ENCODE measurements at regions of chr12 and their contacts with region 1.

Region 1: DNA sequence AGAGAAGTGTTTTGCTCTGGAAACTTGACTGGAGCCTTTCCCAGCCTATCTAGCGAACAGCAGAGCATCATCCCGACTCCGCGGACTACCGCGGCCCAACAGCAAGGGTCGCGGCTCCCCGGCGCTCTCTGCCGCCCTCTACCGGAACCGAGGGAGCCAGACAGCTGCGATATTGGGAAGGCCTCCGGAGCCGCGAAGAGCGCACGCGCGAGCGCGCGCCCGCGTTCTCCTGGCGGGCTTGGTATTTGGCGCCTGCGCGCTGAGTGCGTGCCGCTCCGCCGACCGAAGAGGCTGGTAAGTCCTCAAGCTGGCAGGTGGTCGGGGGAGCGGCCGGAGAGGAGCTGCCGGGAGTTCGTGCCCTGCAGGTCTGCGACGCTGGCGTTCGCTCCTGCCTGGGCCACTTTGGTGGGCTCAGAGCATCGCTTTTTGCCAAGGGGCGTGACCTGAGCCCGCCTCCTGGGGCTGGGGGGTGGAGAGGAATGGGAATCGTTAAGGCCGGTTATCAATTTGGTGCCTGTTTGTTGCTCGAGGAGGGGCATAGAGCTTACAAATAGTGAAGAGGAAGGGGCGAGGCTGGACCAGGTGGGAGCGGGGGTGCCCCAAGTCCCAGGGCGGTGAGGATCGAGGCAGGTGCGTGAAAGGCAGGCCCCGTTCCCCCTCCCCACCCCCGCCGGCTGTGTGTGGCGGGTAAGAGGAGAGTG is at the start of gene TMEM106C:
- DNase-seq: peak; percentile 75
- ATAC-seq: peak; percentile 98
- H3K4me3 ChIP-seq: peak within 1 kb of the TSS; percentile 81
- H3K27ac ChIP-seq: peak within 1 kb of the TSS; percentile 21
- H3K4me1 ChIP-seq: peaks cover 3% of the 10 kb centered on the region
- H3K27me3 ChIP-seq: no peaks in the 10 kb centered on the region; a peak in 2 of 4 replicates
- CTCF ChIP-seq: peak; percentile 98 to 99 (median 99); a peak in 5 of 6 replicates
- EP300 ChIP-seq: no peak
- POLR2A ChIP-seq: peak; percentile 82
- RAD21 ChIP-seq: peak; percentile 68
- polyA plus RNA-seq, gene TMEM106C: 190 to 236 TPM

Region 2: DNA sequence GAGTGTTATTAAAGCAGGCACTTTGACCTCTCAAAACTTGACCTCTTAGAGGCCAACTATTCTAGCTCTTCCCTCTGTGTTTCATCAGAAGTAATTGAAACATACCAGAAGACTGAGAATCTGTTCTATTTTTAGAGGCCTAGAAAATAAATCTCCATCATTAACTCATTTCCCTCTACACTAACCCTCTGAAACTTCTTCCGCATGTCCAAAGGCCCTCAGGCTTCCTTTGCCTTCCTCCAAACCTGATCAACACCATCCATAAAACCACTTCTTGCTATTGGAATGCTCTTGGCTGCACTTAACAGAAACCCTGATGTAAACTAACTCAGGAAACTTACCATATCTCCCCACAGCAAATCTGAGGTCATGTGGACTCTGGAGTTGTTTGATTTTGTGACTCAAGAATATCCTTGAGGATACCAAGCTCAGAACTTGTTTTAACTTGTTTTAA is 454.1 kb before region 1 on chr12:
- CTCF ChIA-PET with region 1: no interaction called
- POLR2A ChIA-PET with region 1: no interaction called
- RAD21 ChIA-PET with region 1: no interaction called
- SMC1A ChIA-PET with region 1: no interaction called
- in situ Hi-C with region 1: no loop called
- intact Hi-C with region 1: no loop called
- DNase-seq: no peak
- ATAC-seq: no peak
- H3K4me3 ChIP-seq: no peak overlapping the region
- H3K27ac ChIP-seq: no peak overlapping the region
- H3K4me1 ChIP-seq: no peaks in the 10 kb centered on the region
- H3K27me3 ChIP-seq: no peaks in the 10 kb centered on the region
- CTCF ChIP-seq: no peak
- EP300 ChIP-seq: no peak
- POLR2A ChIP-seq: no peak
- RAD21 ChIP-seq: no peak

Region 3: GRCh38 chr12:47870175-47870781 is 93.2 kb before region 1 on chr12:
- CTCF ChIA-PET with region 1: interaction called, 5 read pairs
- POLR2A ChIA-PET with region 1: no interaction called
- RAD21 ChIA-PET with region 1: interaction called, 8 read pairs
- SMC1A ChIA-PET with region 1: no interaction called
- in situ Hi-C with region 1: no loop called
- intact Hi-C with region 1: loop called (anchors 5 kb)
- DNase-seq: peak; percentile 43
- ATAC-seq: peak; percentile 76
- H3K4me3 ChIP-seq: no peak overlapping the region
- H3K27ac ChIP-seq: 0 out of 2 replicates have a peak overlapping the region, but pooled peaks have one; percentile 4
- H3K4me1 ChIP-seq: peaks cover 31% of the 10 kb centered on the region
- H3K27me3 ChIP-seq: no peaks in the 10 kb centered on the region
- CTCF ChIP-seq: peak; percentile 22 to 62 (median 53); a peak in 5 of 6 replicates
- EP300 ChIP-seq: no peak
- POLR2A ChIP-seq: no peak
- RAD21 ChIP-seq: peak; percentile 51

Region 4: DNA sequence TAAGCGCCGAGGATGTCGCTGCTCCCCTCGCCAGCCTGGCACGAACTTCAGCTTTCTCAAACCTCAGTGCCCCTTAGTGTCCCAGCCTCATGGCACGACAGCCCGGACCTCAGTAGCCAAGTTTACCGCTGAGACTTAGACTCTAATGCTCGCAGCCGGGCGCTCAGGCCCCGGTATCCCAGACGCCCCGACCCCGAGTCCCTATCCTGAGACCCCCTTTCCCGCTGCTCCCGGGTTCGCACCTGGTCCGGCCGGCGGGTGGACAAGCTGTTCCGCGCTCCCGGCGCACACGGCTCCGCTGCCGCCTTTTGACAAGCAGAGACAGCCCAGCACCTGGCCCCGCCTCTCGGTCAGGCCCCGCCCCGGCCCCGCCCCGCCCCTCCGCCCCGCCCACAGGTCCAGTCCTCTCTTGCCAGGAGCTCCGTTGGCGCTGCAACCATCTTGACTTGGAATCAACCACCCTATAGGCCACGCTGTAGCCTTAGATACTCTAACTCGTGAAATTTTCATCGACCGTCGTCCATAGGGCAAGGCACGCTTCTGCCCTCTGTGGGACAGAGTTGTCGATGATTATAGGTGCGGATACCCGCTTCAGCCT is 58.7 kb before region 1 on chr12 and contains the start of gene VDR:
- CTCF ChIA-PET with region 1: interaction called, 11 read pairs
- POLR2A ChIA-PET with region 1: no interaction called
- RAD21 ChIA-PET with region 1: interaction called, 3 read pairs
- SMC1A ChIA-PET with region 1: interaction called, 4 read pairs
- in situ Hi-C with region 1: no loop called
- intact Hi-C with region 1: no loop called
- DNase-seq: no peak
- ATAC-seq: peak; percentile 85
- H3K4me3 ChIP-seq: peak within 1 kb of the TSS; percentile 84
- H3K27ac ChIP-seq: no peak within 1 kb of the TSS
- H3K4me1 ChIP-seq: peaks cover 30% of the 10 kb centered on the region
- H3K27me3 ChIP-seq: peaks cover 4 to 5% of the 10 kb centered on the region in 2 experiments; a peak in 1 of 4 replicates
- CTCF ChIP-seq: peak in 2 of 3 experiments; percentile 4 to 34; a peak in 2 of 6 replicates
- EP300 ChIP-seq: no peak
- POLR2A ChIP-seq: peak; percentile 69
- RAD21 ChIP-seq: no peak
- polyA plus RNA-seq, gene VDR: 0.27 to 0.75 TPM

Region 5: GRCh38 chr12:47949441-47950308 is 13.8 kb before region 1 on chr12:
- CTCF ChIA-PET with region 1: interaction called, 13 read pairs
- POLR2A ChIA-PET with region 1: no interaction called
- RAD21 ChIA-PET with region 1: interaction called, 4 read pairs
- SMC1A ChIA-PET with region 1: interaction called, 3 read pairs
- in situ Hi-C with region 1: no loop called
- intact Hi-C with region 1: no loop called
- DNase-seq: no peak
- ATAC-seq: peak; percentile 93
- H3K4me3 ChIP-seq: no peak overlapping the region
- H3K27ac ChIP-seq: no peak overlapping the region
- H3K4me1 ChIP-seq: no peaks in the 10 kb centered on the region
- H3K27me3 ChIP-seq: 0 out of 4 replicates have a peak, but pooled peaks cover 0 to 5% of the 10 kb centered on the region in 2 experiments
- CTCF ChIP-seq: peak; percentile 75 to 89 (median 87)
- EP300 ChIP-seq: no peak
- POLR2A ChIP-seq: no peak
- RAD21 ChIP-seq: peak; percentile 76

Region 6: GRCh38 chr12:48084066-48084465 is 120.6 kb after region 1 on chr12:
- CTCF ChIA-PET with region 1: no interaction called
- POLR2A ChIA-PET with region 1: no interaction called
- RAD21 ChIA-PET with region 1: no interaction called
- SMC1A ChIA-PET with region 1: interaction called, 4 read pairs
- in situ Hi-C with region 1: no loop called
- intact Hi-C with region 1: loop called (anchors 5 kb)
- DNase-seq: no peak
- ATAC-seq: no peak
- H3K4me3 ChIP-seq: no peak overlapping the region
- H3K27ac ChIP-seq: no peak overlapping the region
- H3K4me1 ChIP-seq: no peaks in the 10 kb centered on the region; the same call in 1 of the 2 replicates
- H3K27me3 ChIP-seq: no peaks in the 10 kb centered on the region; a peak in 1 of 4 replicates
- CTCF ChIP-seq: no peak; a peak in 1 of 6 replicates
- EP300 ChIP-seq: no peak
- POLR2A ChIP-seq: no peak
- RAD21 ChIP-seq: peak; percentile 28

Region 7: DNA sequence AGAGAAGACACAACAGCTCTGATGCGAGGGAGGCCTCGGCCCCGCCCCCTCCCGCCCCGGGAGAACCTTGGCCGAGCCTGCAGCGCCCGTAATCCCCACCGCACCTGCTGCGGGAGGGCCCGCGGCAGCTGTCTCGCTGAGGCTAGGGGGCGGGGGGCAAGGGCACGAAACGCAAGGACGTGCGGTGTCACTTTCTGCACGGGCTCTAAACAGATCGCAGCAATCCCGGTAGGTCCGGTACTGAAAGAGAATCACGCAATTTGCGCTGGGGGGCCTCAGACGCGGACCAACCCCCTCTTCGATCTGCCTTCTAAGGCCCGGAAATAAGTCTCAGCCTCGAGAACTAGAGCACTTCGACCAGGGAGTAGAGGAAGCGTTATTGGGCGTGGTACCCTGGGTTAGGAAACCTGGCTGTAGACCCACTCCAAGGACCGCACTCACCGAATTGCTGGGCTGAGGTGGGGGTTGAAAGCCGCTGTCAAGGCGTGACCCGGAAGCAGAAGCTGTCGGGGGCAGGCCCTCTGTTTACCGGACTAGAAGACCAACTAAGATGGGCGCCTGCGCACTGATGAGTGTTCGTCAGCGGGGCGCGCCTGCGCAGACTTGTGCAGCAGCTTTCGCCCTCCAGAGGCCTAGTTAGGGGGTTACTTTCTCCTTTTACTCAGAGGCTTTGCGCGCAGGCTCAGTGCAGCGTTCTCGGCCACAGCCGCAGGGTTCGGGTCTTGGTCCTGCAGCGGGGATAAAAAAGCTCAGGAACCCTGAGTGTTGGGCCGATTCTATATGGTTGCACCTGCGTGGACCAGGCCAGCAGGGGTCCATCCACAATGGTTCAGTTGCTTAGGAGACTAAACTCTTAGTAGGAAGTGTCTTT is 193.8 kb after region 1 on chr12 and contains the start of gene ASB8:
- CTCF ChIA-PET with region 1: interaction called, 16 read pairs
- POLR2A ChIA-PET with region 1: interaction called, 3 read pairs
- RAD21 ChIA-PET with region 1: interaction called, 3 read pairs
- SMC1A ChIA-PET with region 1: no interaction called
- in situ Hi-C with region 1: loop called (anchors 5 kb)
- intact Hi-C with region 1: no loop called
- DNase-seq: peak; percentile 98
- ATAC-seq: peak; percentile 95
- H3K4me3 ChIP-seq: peak within 1 kb of the TSS; percentile 86
- H3K27ac ChIP-seq: peak within 1 kb of the TSS; percentile 89
- H3K4me1 ChIP-seq: peaks cover 23% of the 10 kb centered on the region
- H3K27me3 ChIP-seq: no peaks in the 10 kb centered on the region
- CTCF ChIP-seq: peak; percentile 31 to 58 (median 58); a peak in 5 of 6 replicates
- EP300 ChIP-seq: no peak
- POLR2A ChIP-seq: peak; percentile 82
- RAD21 ChIP-seq: no peak
- polyA plus RNA-seq, gene ASB8: 28.3 to 30.3 TPM

Region 8: DNA sequence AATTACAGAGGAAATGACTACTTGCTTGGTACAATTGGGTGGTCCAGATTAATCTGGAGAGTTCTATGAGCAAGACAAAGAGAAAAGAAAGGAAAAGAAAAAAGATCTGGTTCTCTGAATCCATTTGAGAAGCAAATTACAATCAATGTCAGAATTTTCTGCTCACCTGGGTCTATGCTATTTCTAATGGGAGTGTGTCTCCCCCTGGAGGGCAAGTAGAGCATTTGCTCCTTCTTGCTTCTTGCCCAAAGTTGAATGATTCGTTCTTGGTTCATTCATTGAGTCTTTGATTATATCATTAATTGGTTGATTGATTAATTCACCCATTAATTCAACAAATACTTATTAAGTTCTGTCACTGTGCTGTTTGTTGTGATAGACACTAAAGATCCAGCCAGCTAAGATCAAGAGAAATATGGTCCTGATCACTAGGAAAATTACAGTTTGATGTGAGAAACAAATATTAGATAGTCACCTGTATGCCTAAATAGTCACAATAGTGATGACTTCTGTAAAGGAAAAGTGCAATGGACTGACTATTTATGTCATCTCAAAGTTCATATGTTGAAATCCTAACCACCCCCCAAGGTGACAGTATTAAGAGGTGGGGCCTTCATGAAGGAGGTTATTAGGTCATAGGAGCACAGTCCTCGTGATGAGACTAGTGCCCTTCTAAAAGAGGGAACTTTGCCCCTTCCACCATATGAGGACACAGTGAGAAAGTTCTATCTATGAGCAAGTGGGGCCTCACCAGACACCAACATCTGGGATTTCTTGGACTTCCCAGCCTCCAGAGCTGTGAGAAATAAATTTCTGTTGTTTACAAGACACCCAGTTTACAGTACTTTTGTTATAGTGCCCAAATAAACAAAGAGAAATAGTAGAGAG is 201.8 kb after region 1 on chr12:
- CTCF ChIA-PET with region 1: interaction called, 14 read pairs
- POLR2A ChIA-PET with region 1: no interaction called
- RAD21 ChIA-PET with region 1: interaction called, 7 read pairs
- SMC1A ChIA-PET with region 1: interaction called, 4 read pairs
- in situ Hi-C with region 1: loop called (anchors 5 kb)
- intact Hi-C with region 1: loop called (anchors 2 kb)
- DNase-seq: peak; percentile 45
- ATAC-seq: peak; percentile 82
- H3K4me3 ChIP-seq: no peak overlapping the region
- H3K27ac ChIP-seq: no peak overlapping the region
- H3K4me1 ChIP-seq: peaks cover 4% of the 10 kb centered on the region; the same call in 1 of the 2 replicates
- H3K27me3 ChIP-seq: peaks cover 0 to 2% of the 10 kb centered on the region in 2 experiments; a peak in 2 of 4 replicates
- CTCF ChIP-seq: peak; percentile 89 to 94 (median 93)
- EP300 ChIP-seq: no peak
- POLR2A ChIP-seq: no peak
- RAD21 ChIP-seq: peak; percentile 92

Measured in GM12878 (cell line).